ENCODE measurements at regions of chr5 and their contacts with region 1.

Region 1: GRCh38 chr5:37005946-37006540 is 129.5 kb downstream of the NIPBL start:
- DNase-seq: peak; percentile 50
- H3K4me3 ChIP-seq: no peak overlapping the region
- H3K27ac ChIP-seq: no peak overlapping the region
- H3K4me1 ChIP-seq: peaks cover 4% of the 10 kb centered on the region
- H3K27me3 ChIP-seq: no peaks in the 10 kb centered on the region
- CTCF ChIP-seq: peak; percentile 27 to 34
- POLR2A ChIP-seq: no peak

Region 2: GRCh38 chr5:36728697-36729543 is 277.1 kb before region 1 on chr5:
- CTCF ChIA-PET with region 1: interaction called, 47 read pairs
- POLR2A ChIA-PET with region 1: no interaction called
- dilution Hi-C with region 1: no loop called
- intact Hi-C with region 1: no loop called
- DNase-seq: peak; percentile 68
- H3K4me3 ChIP-seq: no peak overlapping the region
- H3K27ac ChIP-seq: no peak overlapping the region
- H3K4me1 ChIP-seq: no peaks in the 10 kb centered on the region
- H3K27me3 ChIP-seq: peaks cover 0 to 3% of the 10 kb centered on the region in 2 experiments
- CTCF ChIP-seq: peak; percentile 38 to 52
- POLR2A ChIP-seq: no peak

Region 3: DNA sequence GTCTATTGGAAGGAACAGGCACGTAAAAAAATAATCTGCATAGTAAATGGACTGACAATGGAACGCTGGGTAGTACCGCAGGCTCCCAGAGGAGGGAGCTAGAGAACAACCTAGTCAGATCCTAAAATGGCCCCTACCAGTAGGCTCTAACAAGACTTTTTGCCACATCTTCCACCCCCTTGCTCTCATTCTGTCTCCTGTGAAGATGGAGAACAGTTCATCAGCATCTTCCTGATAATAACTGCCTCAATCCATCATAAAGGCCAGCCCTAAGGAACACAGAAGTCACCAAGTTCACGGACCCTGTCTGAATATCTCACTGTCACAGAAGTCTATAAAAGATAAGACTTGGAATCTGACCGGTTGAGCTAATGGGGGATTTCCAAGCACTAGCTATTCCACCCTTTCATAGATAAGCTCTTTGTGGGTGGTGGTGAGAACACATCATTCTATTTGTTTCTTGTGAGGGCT is 266.3 kb before region 1 on chr5:
- CTCF ChIA-PET with region 1: interaction called, 57 read pairs
- POLR2A ChIA-PET with region 1: no interaction called
- dilution Hi-C with region 1: no loop called
- intact Hi-C with region 1: loop called (anchors 1 kb)
- DNase-seq: peak; percentile 80
- H3K4me3 ChIP-seq: no peak overlapping the region
- H3K27ac ChIP-seq: no peak overlapping the region
- H3K4me1 ChIP-seq: no peaks in the 10 kb centered on the region
- H3K27me3 ChIP-seq: peaks cover 16 to 17% of the 10 kb centered on the region in 2 experiments
- CTCF ChIP-seq: peak; percentile 73 to 83
- POLR2A ChIP-seq: no peak

Region 4: DNA sequence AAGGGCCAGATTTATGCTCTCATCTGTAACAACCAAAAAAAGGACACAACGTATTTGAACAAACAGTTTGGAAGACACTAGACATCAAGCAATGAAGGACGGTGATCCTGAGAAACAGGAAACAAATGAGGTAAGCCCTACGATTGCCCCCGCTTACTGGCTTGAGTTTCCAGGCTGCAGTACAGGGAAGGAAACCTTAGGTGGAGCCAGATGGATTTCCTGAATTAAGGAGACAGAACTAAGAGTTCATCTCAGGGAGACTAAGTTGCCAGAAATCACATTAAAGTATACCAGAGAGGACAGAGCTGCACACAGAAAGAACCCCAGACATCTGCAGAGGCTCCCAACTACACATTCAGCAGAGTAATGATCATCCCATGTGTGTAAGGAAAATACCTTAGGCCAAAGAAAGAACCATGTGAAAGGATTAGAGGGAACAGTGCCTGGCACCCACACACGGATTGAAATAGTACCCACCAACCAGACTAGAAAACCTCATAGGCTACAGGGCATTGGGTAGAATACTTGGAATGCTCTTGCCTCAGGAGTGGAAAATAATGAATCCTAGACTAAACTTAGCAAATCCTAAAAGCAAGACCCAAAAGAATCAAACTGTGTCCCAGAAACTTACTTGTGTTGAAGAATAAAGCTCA is 228.8 kb before region 1 on chr5:
- CTCF ChIA-PET with region 1: interaction called, 13 read pairs
- POLR2A ChIA-PET with region 1: no interaction called
- dilution Hi-C with region 1: no loop called
- intact Hi-C with region 1: loop called (anchors 1 kb)
- DNase-seq: peak; percentile 50
- H3K4me3 ChIP-seq: no peak overlapping the region
- H3K27ac ChIP-seq: no peak overlapping the region
- H3K4me1 ChIP-seq: no peaks in the 10 kb centered on the region
- H3K27me3 ChIP-seq: no peaks in the 10 kb centered on the region
- CTCF ChIP-seq: peak in 1 of 2 donors; percentile 35
- POLR2A ChIP-seq: no peak

Region 5: DNA sequence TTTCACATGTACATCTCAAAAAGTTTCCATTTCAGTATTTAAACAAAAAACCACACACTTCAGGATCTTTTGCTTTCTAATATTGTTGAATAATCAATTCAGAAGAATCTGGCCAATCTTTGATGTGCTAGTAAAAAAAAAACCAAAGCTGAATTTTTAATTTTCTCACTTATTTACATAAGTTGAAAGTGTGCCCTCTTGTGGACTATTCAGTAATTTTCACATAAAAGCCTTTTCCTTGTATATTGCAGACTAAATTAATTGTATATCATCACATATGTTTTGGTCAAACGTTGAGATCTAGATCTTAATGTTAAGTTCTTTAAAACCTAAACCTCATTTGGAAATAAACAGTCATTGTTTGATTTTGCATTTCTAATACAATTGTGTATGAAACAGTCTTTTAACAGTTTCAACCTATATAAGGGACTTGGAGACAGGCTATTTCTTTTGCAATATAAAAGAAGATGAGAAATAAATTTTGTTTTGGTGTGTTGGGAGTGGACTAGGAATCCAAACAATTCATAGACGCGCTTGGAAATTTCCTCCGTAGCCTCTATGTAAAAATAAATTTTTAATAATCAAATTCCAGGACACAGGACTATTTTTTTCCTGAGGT is 61.3 kb before region 1 on chr5:
- CTCF ChIA-PET with region 1: interaction called, 22 read pairs
- POLR2A ChIA-PET with region 1: no interaction called
- dilution Hi-C with region 1: no loop called
- intact Hi-C with region 1: no loop called
- DNase-seq: peak; percentile 69
- H3K4me3 ChIP-seq: no peak overlapping the region
- H3K27ac ChIP-seq: no peak overlapping the region
- H3K4me1 ChIP-seq: peaks cover 16% of the 10 kb centered on the region
- H3K27me3 ChIP-seq: no peaks in the 10 kb centered on the region
- CTCF ChIP-seq: peak; percentile 23 to 34
- POLR2A ChIP-seq: no peak

Region 6: GRCh38 chr5:36988396-36988795 is 17.6 kb before region 1 on chr5:
- CTCF ChIA-PET with region 1: interaction called, 29 read pairs
- POLR2A ChIA-PET with region 1: no interaction called
- dilution Hi-C with region 1: no loop called
- intact Hi-C with region 1: no loop called
- DNase-seq: no peak
- H3K4me3 ChIP-seq: no peak overlapping the region
- H3K27ac ChIP-seq: no peak overlapping the region
- H3K4me1 ChIP-seq: no peaks in the 10 kb centered on the region
- H3K27me3 ChIP-seq: no peaks in the 10 kb centered on the region
- CTCF ChIP-seq: no peak
- POLR2A ChIP-seq: no peak